HEK293 (cell line): ENCODE measurements at regions of chr1 and their contacts with region 1.

Region 1: GRCh38 chr1:12430525-12430924 is 187.5 kb downstream of the DHRS3 start:
- H3K4me3 ChIP-seq: no peak overlapping the region
- H3K27ac ChIP-seq: no peak overlapping the region
- H3K4me1 ChIP-seq: peaks cover 16% of the 10 kb centered on the region
- CTCF ChIP-seq: no peak

Region 2: GRCh38 chr1:12014141-12014991 is 416.2 kb before region 1 on chr1:
- CTCF ChIA-PET with region 1: no interaction called
- POLR2A ChIA-PET with region 1: no interaction called
- H3K4me3 ChIP-seq: no peak overlapping the region
- H3K27ac ChIP-seq: no peak overlapping the region
- H3K4me1 ChIP-seq: no peaks in the 10 kb centered on the region
- CTCF ChIP-seq: no peak

Region 3: GRCh38 chr1:12386130-12386529 is 44.4 kb before region 1 on chr1:
- CTCF ChIA-PET with region 1: no interaction called
- POLR2A ChIA-PET with region 1: no interaction called
- H3K4me3 ChIP-seq: no peak overlapping the region
- H3K27ac ChIP-seq: no peak overlapping the region
- H3K4me1 ChIP-seq: no peaks in the 10 kb centered on the region
- CTCF ChIP-seq: no peak

Region 4: DNA sequence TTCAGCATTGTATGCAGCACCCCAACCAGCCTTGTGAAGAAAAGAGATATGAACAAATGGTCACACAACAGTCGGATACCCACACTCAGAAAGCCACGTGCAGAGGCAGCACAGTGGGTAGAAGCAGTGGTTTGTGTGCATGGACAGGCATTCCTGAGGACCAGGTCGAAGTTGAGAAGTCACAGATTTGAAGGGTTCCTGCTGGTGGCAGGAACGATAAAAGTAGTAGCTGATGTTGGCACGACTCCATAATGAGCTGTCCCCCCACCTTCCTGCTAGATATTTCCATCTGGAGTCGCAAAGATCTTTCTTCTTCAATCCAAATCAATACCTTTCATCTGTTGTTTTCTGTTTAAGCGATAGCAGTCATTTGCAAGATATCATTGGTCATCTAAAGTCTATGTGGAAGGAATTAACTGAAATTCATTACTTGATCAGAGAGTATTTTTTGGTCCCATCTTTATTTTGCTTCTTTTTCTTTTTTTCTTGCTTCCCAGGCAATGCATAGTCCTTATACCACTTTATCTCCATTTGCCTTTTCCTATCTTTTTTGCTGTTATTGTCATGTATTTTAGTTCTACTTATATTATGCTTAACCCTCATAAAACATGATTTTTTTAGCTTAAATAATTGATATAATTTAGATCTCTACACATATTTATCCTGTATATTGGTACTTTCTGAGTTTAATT is 11.0 kb after region 1 on chr1:
- CTCF ChIA-PET with region 1: no interaction called
- POLR2A ChIA-PET with region 1: no interaction called
- H3K4me3 ChIP-seq: no peak overlapping the region
- H3K27ac ChIP-seq: no peak overlapping the region
- H3K4me1 ChIP-seq: no peaks in the 10 kb centered on the region
- CTCF ChIP-seq: no peak

Region 5: DNA sequence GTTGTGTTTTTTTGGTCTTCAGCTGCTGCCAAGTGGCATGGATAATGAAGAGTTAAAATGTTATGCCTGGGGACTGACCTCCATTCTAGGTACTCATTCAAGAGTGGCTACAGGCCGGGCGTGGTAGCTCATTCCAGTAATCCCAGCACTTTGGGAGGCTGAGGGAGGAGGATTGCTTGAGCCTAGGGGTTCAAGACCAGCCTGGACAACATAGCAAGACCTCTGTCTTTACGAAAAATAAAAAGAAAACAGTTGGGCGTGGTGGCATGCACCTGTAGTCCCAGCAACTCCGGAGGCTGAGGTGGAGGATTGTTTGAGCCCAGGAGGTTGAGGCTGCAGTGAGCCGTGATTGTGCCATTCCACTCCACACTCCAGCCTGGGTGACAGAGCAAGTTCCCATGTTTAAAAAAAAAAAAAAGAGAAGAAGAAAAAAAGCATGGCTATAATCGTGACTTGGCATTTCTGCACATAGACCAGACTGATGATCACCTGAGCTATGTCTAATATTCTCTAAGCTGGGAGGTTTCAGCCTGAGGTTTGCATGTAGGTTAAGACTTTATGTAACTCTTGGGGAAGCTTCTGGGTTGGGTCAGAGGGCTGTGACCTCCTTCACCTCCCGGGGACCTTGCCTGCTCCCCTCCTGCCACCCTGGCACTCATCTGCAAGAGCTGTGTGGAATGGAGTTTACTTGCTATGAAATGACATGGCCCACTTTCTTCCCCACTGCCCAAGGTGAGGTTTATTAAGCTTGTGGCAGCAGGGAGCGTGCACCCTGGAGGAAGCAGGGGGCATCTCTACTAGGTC is 136.2 kb after region 1 on chr1:
- CTCF ChIA-PET with region 1: interaction called, 10 read pairs
- POLR2A ChIA-PET with region 1: no interaction called
- H3K4me3 ChIP-seq: no peak overlapping the region
- H3K27ac ChIP-seq: no peak overlapping the region
- H3K4me1 ChIP-seq: no peaks in the 10 kb centered on the region
- CTCF ChIP-seq: no peak